ENCODE measurements at regions of chr1 and their contacts with region 1.

Region 1: GRCh38 chr1:9317591-9318417 is 25.1 kb downstream of the SPSB1 start:
- DNase-seq: peak; percentile 42
- ATAC-seq: no peak
- H3K4me3 Mint-ChIP-seq: peak overlapping the region; percentile 18
- H3K27ac Mint-ChIP-seq: peak overlapping the region; percentile 42
- H3K4me1 Mint-ChIP-seq: peaks cover 38% of the 10 kb centered on the region
- H3K27me3 Mint-ChIP-seq: no peaks in the 10 kb centered on the region

Region 2: DNA sequence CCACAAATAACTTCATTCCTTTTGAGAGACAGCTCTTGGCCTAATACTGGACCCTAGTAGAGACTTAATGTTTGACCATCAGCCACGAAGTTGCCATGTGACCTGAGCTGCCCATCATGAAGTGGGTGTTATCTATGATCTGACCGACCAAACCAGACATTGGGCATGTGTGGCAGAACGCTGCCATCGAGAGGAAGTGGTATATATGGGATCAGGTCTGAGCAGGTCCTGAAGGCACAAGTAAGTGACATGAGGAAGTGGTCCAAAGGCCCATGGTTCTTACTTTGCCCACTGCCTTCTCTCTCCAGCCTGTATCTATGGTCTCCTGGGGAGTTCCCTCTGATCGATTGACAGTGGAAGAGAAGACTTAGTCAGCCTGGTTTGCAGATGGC is 17.3 kb before region 1 on chr1:
- CTCF ChIA-PET with region 1: no interaction called
- POLR2A ChIA-PET with region 1: no interaction called
- intact Hi-C with region 1: no loop called
- DNase-seq: no peak
- ATAC-seq: no peak
- H3K4me3 Mint-ChIP-seq: no peak overlapping the region
- H3K27ac Mint-ChIP-seq: peak overlapping the region; percentile 33
- H3K4me1 Mint-ChIP-seq: peaks cover 11% of the 10 kb centered on the region
- H3K27me3 Mint-ChIP-seq: no peaks in the 10 kb centered on the region

Region 3: DNA sequence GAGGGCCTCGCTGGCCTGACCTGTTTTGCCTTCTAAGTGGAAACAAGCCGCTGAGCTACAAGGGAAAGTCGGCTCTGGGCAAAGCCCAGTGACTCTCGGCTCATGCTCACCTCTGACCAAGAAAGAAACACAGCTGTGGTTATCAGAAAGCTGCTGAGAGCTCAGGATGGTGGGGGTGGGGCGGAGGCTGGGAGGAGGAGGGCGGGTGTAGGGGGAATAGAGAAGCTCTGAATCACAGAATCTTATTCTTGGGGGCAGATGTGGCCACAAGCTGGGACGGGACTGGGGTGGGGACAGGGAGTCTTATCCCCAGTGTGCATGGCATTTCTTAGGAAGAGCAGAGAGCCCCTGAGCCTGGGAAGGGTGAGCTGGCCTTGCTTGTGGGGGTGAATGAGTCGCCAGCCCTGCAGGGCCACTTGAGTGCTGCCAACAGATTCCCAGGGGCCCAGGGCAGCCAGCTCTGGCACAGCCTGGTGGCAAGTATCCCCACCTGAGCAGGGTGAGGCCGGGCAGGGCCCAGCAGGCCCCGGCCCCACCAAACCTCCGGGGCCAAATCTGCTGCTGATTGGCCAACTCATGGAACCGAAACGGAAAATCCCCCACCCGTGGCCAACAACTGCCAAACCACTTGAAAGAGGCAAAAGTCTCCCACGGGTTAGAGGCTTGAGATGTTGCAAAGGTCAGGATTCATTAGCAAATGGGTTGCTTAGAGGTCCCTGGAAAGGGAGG is 95.5 kb after region 1 on chr1:
- CTCF ChIA-PET with region 1: no interaction called
- POLR2A ChIA-PET with region 1: interaction called, 4 read pairs
- intact Hi-C with region 1: loop called (anchors 1 to 5 kb)
- DNase-seq: peak; percentile 90
- ATAC-seq: peak; percentile 89
- H3K4me3 Mint-ChIP-seq: no peak overlapping the region
- H3K27ac Mint-ChIP-seq: peak overlapping the region; percentile 55
- H3K4me1 Mint-ChIP-seq: peaks cover 50% of the 10 kb centered on the region
- H3K27me3 Mint-ChIP-seq: peaks cover 3% of the 10 kb centered on the region